CD4-positive, alpha-beta T cell (primary cell): ENCODE measurements at regions of chr6 and their contacts with region 1.

Region 1: DNA sequence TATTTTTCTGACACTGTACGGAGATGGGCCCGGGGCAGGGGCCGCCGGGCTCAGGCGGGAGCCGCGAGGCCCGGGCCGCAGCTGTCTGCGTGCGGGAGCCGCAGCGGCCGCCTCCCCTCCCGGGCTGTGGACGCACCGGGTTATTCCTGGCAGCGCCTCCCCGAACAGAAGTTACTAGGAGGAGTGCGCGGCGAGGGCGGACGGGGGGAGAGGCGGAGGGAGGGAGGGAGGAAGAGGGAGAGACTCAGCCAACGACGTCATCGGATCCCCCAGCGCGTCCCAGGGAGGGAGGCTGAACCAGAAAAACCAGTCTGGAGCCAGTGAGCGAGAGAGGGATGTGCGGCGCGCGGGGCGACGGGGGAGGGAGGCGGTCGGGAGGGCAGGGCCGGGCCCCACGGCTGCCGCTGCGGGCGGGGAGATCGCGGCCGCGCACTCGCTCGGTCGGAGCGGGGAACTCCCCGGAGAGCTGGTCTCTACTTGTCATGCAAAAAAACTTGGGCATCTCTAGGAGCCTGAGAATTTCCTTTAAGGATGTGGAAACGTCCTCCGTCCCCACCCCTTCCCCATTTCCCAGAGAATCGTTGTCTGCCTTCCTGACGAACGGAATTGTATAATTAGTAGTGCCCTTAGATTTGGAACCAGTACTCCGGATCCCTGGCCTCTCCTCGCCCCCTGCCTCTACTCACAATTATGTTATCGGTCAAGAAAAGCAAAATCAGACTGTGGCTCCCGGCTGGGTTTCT is 1.4 kb upstream of the HIVEP2 start:
- DNase-seq: peak; percentile 75 to 99 (median 90)
- ATAC-seq: peak; percentile 46
- H3K4me3 ChIP-seq: peak overlapping the region; percentile 94
- H3K4me3 Mint-ChIP-seq: peak overlapping the region; percentile 96
- H3K27ac ChIP-seq: peak overlapping the region; percentile 98 to 100
- H3K27ac Mint-ChIP-seq: peak overlapping the region; percentile 98
- H3K4me1 ChIP-seq: peaks cover 14% of the 10 kb centered on the region
- H3K4me1 Mint-ChIP-seq: peaks cover 42% of the 10 kb centered on the region
- H3K27me3 ChIP-seq: no peaks in the 10 kb centered on the region
- H3K27me3 Mint-ChIP-seq: peaks cover 5% of the 10 kb centered on the region
- CTCF ChIP-seq: no peak

Region 2: GRCh38 chr6:142566628-142567396 is 379.5 kb before region 1 on chr6:
- CTCF ChIA-PET with region 1: no interaction called
- POLR2A ChIA-PET with region 1: interaction called, 5 read pairs
- intact Hi-C with region 1: loop called (anchors 5 kb)
- DNase-seq: peak; percentile 14 to 76 (median 47)
- ATAC-seq: peak; percentile 62
- H3K4me3 ChIP-seq: no peak overlapping the region
- H3K4me3 Mint-ChIP-seq: peak overlapping the region; percentile 57
- H3K27ac ChIP-seq: no peak overlapping the region
- H3K27ac Mint-ChIP-seq: peak overlapping the region; percentile 79
- H3K4me1 ChIP-seq: peaks cover 35% of the 10 kb centered on the region
- H3K4me1 Mint-ChIP-seq: peaks cover 77% of the 10 kb centered on the region
- H3K27me3 ChIP-seq: no peaks in the 10 kb centered on the region
- H3K27me3 Mint-ChIP-seq: no peaks in the 10 kb centered on the region
- CTCF ChIP-seq: peak; percentile 82

Region 3: GRCh38 chr6:142746524-142746923 is 199.8 kb before region 1 on chr6:
- CTCF ChIA-PET with region 1: no interaction called
- POLR2A ChIA-PET with region 1: interaction called, 5 read pairs
- intact Hi-C with region 1: loop called (anchors 2 to 5 kb)
- DNase-seq: peak in 11 of 14 experiments; percentile 7 to 67 (median 15)
- ATAC-seq: peak; percentile 55
- H3K4me3 ChIP-seq: no peak overlapping the region
- H3K4me3 Mint-ChIP-seq: no peak overlapping the region
- H3K27ac ChIP-seq: no peak overlapping the region
- H3K27ac Mint-ChIP-seq: no peak overlapping the region
- H3K4me1 ChIP-seq: peaks cover 6% of the 10 kb centered on the region
- H3K4me1 Mint-ChIP-seq: peaks cover 28% of the 10 kb centered on the region
- H3K27me3 ChIP-seq: no peaks in the 10 kb centered on the region
- H3K27me3 Mint-ChIP-seq: no peaks in the 10 kb centered on the region
- CTCF ChIP-seq: peak; percentile 56

Region 4: DNA sequence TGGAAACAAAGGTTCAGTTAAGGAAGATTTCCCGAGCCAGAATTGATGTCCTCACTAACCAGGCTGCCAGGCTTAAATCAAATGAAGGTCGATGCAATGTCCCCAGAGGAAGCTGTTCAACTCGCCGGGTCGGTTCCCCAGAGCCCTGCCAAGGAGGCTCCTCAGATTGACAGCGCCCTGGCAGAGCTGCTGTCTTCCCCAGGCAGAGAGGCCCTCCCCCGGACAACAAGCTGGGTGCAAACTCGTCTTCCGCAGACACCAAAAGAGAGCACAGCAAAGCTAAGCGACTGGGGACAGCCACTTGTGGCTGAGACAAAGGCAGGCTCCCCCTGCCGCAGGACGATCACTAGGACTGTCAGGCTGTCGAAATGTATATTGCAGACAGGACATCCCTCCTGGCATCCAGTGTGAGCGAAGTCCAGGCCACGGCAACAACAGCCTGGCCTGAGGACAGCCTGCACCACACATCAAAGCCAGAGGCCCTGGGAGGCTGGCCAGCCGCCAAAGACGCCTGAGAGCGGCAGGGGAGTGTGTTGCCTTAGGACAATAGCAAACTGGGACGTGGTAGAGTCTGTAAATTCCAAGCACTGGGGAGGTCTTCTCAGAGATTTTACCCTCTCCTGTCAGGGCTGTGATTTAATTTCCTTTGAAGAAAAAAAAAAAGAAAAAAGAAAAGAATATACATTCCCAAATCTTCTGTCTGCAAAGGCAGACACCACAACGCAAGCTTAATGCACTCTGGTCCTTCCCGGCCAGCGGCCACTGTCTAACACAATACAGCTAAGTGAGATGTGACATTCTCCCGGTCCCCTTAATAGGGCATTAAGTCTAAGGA is 100.5 kb before region 1 on chr6:
- CTCF ChIA-PET with region 1: interaction called, 5 read pairs
- POLR2A ChIA-PET with region 1: interaction called, 38 read pairs
- intact Hi-C with region 1: loop called in 1 of 2 experiments (anchors 2 kb)
- DNase-seq: peak; percentile 48 to 84 (median 66)
- ATAC-seq: peak; percentile 50
- H3K4me3 ChIP-seq: peak overlapping the region; percentile 53
- H3K4me3 Mint-ChIP-seq: peak overlapping the region; percentile 85
- H3K27ac ChIP-seq: peak overlapping the region; percentile 88 to 93
- H3K27ac Mint-ChIP-seq: peak overlapping the region; percentile 94
- H3K4me1 ChIP-seq: peaks cover 49% of the 10 kb centered on the region
- H3K4me1 Mint-ChIP-seq: peaks cover 97% of the 10 kb centered on the region
- H3K27me3 ChIP-seq: no peaks in the 10 kb centered on the region
- H3K27me3 Mint-ChIP-seq: no peaks in the 10 kb centered on the region
- CTCF ChIP-seq: no peak

Region 5: GRCh38 chr6:142902636-142903053 is 43.7 kb before region 1 on chr6:
- CTCF ChIA-PET with region 1: interaction called, 4 read pairs
- POLR2A ChIA-PET with region 1: interaction called, 172 read pairs
- intact Hi-C with region 1: loop called (anchors 1 to 2 kb)
- DNase-seq: peak; percentile 55 to 95 (median 70)
- ATAC-seq: peak; percentile 57
- H3K4me3 ChIP-seq: peak overlapping the region; percentile 62
- H3K4me3 Mint-ChIP-seq: peak overlapping the region; percentile 81
- H3K27ac ChIP-seq: peak overlapping the region; percentile 86 to 93
- H3K27ac Mint-ChIP-seq: no peak overlapping the region
- H3K4me1 ChIP-seq: peaks cover 40% of the 10 kb centered on the region
- H3K4me1 Mint-ChIP-seq: peaks cover 26% of the 10 kb centered on the region
- H3K27me3 ChIP-seq: no peaks in the 10 kb centered on the region
- H3K27me3 Mint-ChIP-seq: no peaks in the 10 kb centered on the region
- CTCF ChIP-seq: no peak

Region 6: DNA sequence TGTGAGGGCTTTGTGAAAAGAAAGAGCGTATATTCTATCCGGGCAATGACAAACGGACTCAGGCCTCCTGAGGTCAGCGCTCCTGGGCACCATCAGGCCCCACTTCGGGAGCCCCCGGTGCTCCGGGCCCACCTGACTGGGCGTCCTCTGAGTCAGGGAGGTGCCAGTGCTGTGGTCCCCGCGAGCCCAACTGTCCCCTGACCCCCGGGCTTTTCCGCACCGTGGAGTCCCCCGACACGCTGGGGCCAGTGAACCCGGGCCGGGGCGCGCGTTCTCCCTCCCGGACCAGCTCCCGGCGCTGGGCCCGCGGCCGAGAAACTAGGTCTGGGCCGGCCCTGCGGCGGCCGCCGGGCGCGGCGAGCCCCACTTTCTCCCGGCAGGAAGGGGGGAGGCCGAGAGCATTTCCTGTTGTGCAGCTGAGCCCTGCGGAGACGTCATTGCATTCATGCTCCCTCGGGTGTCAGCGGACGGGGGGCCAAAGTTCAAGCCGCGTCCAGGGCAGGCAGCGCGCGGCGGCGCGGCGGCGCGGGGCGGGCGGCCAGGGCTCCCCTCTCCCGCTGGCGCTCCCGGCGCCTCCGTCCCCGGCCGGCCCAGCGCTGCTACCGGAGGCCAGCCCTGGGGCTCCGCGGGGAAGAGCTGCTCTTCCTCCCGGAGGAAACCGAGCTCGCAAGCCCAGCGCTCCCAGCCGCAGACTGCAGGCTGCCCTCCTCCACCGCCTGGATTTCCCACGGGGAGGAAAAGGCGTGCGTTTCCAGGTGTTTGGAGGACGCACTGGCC is 19.7 kb before region 1 on chr6:
- CTCF ChIA-PET with region 1: interaction called, 3 read pairs
- POLR2A ChIA-PET with region 1: interaction called, 382 read pairs
- intact Hi-C with region 1: loop called (anchors 1 to 2 kb)
- DNase-seq: peak; percentile 64 to 94 (median 74)
- ATAC-seq: peak; percentile 78
- H3K4me3 ChIP-seq: peak overlapping the region; percentile 85
- H3K4me3 Mint-ChIP-seq: peak overlapping the region; percentile 95
- H3K27ac ChIP-seq: peak overlapping the region; percentile 98 to 99
- H3K27ac Mint-ChIP-seq: peak overlapping the region; percentile 95
- H3K4me1 ChIP-seq: peaks cover 9% of the 10 kb centered on the region
- H3K4me1 Mint-ChIP-seq: peaks cover 66% of the 10 kb centered on the region
- H3K27me3 ChIP-seq: no peaks in the 10 kb centered on the region
- H3K27me3 Mint-ChIP-seq: no peaks in the 10 kb centered on the region
- CTCF ChIP-seq: no peak

Region 7: GRCh38 chr6:143060354-143060805 is 114.0 kb after region 1 on chr6:
- CTCF ChIA-PET with region 1: no interaction called
- POLR2A ChIA-PET with region 1: interaction called, 13 read pairs
- intact Hi-C with region 1: loop called in 1 of 2 experiments (anchors 5 kb)
- DNase-seq: peak; percentile 50 to 90 (median 68)
- ATAC-seq: peak; percentile 60
- H3K4me3 ChIP-seq: peak overlapping the region; percentile 94
- H3K4me3 Mint-ChIP-seq: peak overlapping the region; percentile 98
- H3K27ac ChIP-seq: peak overlapping the region; percentile 60 to 81
- H3K27ac Mint-ChIP-seq: peak overlapping the region; percentile 98
- H3K4me1 ChIP-seq: peaks cover 19% of the 10 kb centered on the region
- H3K4me1 Mint-ChIP-seq: peaks cover 28% of the 10 kb centered on the region
- H3K27me3 ChIP-seq: no peaks in the 10 kb centered on the region
- H3K27me3 Mint-ChIP-seq: no peaks in the 10 kb centered on the region
- CTCF ChIP-seq: peak; percentile 42